Activated CD4-positive, alpha-beta T cell treated with anti-CD3 and anti-CD28 coated beads for 36 hours (primary cell): ENCODE measurements at regions of chr5 and their contacts with region 1.

Region 1: GRCh38 chr5:171484460-171484899 is 65.0 kb downstream of the FGF18 start:
- DNase-seq: peak; percentile 74
- ATAC-seq: peak; percentile 42
- H3K4me3 Mint-ChIP-seq: no peak overlapping the region
- H3K27ac Mint-ChIP-seq: no peak overlapping the region
- H3K4me1 Mint-ChIP-seq: peaks cover 6% of the 10 kb centered on the region
- H3K27me3 Mint-ChIP-seq: peaks cover 12% of the 10 kb centered on the region

Region 2: GRCh38 chr5:171606414-171607024 is 122.0 kb after region 1 on chr5:
- CTCF ChIA-PET with region 1: interaction called, 4 read pairs
- POLR2A ChIA-PET with region 1: no interaction called
- intact Hi-C with region 1: loop called (anchors 10 kb)
- DNase-seq: no peak
- ATAC-seq: no peak
- H3K4me3 Mint-ChIP-seq: no peak overlapping the region
- H3K27ac Mint-ChIP-seq: no peak overlapping the region
- H3K4me1 Mint-ChIP-seq: peaks cover 2% of the 10 kb centered on the region
- H3K27me3 Mint-ChIP-seq: peaks cover 30% of the 10 kb centered on the region

Region 3: DNA sequence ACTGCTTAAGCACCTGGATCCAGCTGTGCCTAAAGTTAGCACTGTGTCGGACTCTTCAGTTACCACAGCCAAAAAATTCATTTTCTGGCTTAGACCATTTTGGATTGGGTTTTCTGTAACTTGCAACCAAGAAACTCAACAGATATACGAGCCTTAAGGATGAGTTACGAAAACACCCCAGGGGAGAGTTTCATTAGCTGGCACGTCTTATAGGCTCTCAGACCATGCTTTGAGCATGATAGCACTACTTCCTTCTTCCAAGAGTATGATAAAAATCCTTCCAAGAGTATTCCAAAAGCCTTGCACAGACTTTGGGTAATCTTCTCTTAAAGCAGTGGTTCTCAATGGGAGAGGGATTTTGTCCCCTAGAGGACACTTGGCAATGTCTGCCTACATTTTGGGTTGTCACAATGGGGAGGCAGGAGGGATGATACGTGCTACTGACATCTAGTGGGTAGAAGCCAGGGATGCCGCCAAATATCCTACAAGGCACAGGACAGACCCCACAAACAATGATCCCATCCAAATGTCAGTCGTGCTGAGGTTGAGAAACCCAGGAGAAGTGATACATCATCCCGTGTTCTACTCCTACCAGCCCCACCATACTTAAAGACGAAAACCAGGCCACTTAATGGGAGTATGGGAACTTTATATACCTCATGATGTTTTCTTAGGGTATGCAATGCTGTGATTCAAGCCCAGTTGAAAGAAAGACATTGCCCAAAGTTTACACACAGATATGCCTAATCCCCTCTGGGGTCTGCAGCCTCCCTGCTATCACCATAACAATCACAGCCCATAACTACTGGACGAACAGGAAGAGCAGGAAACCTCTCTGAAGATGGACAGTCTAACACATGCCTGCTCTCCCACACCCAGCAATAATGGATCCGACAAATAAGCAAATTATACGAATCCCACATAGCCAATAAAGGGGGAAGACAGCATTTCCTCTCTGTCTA is 366.1 kb after region 1 on chr5:
- CTCF ChIA-PET with region 1: no interaction called
- POLR2A ChIA-PET with region 1: no interaction called
- intact Hi-C with region 1: loop called in 1 of 2 experiments (anchors 10 kb)
- DNase-seq: no peak
- ATAC-seq: no peak
- H3K4me3 Mint-ChIP-seq: no peak overlapping the region
- H3K27ac Mint-ChIP-seq: no peak overlapping the region
- H3K4me1 Mint-ChIP-seq: peaks cover under 1% of the 10 kb centered on the region
- H3K27me3 Mint-ChIP-seq: no peaks in the 10 kb centered on the region

Region 4: GRCh38 chr5:172044631-172045314 is 560.3 kb after region 1 on chr5:
- CTCF ChIA-PET with region 1: no interaction called
- POLR2A ChIA-PET with region 1: no interaction called
- intact Hi-C with region 1: loop called in 1 of 2 experiments (anchors 5 kb)
- DNase-seq: no peak
- ATAC-seq: no peak
- H3K4me3 Mint-ChIP-seq: no peak overlapping the region
- H3K27ac Mint-ChIP-seq: peak overlapping the region; percentile 21
- H3K4me1 Mint-ChIP-seq: peaks cover 19% of the 10 kb centered on the region
- H3K27me3 Mint-ChIP-seq: no peaks in the 10 kb centered on the region